H1 (cell line): ENCODE measurements at regions of chr7 and their contacts with region 1.

Region 1: GRCh38 chr7:129091484-129092002 is 36.6 kb upstream of the TNPO3 start:
- DNase-seq: peak; percentile 83 to 100
- H3K4me3 ChIP-seq: no peak overlapping the region
- H3K27ac ChIP-seq: no peak overlapping the region
- H3K4me1 ChIP-seq: no peaks in the 10 kb centered on the region
- H3K27me3 ChIP-seq: no peaks in the 10 kb centered on the region
- CTCF ChIP-seq: peak; percentile 98 to 99 (median 99)
- EP300 ChIP-seq: no peak
- POLR2A ChIP-seq: no peak
- RAD21 ChIP-seq: peak; percentile 99 to 100

Region 2: DNA sequence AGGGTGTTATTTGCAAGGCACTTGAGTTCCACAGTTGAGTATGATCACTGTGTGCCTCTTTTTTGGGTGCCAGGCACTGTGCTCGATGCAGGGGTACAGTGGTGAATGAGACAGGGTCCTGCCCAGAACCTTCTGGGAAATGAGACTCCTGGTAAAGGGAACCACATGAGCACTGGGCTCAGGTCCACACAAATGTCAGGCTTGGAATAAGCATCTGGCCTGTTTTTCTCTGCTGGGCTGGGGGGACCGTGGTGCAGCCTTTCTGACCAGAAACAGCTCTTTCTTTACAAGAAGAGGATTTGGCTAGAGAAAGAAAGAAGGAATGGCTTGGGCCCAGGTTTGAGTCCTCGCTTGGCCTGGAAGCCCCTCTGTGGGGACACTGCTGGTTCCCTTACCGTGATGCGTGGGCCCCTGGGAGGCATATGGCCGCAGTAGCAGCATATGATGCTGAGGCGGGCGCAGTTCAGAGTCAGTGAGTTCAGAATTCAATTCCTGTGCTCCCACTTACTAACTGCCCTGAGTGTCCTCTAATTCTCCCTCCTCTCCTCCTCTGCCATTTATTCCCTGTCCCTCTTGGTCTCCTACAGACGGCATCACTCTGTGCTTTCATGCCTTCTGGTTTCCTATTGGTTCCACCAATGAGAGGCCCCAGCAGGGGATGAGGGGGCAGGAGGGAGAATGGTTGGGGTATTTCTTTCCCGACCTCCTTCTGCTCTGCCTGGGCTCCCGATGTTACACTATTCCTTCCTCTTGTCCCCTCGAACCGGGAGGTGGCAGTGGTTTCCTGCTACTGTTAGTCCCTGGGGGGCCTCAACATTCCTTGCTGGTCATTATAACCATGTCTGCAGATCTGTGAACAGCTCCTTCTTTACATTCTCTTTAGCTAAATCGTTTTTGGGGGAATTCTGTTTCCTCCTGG is 171.4 kb before region 1 on chr7:
- CTCF ChIA-PET with region 1: interaction called, 10 read pairs
- POLR2A ChIA-PET with region 1: no interaction called
- DNase-seq: peak in 1 of 2 experiments; percentile 57
- H3K4me3 ChIP-seq: no peak overlapping the region
- H3K27ac ChIP-seq: no peak overlapping the region
- H3K4me1 ChIP-seq: peaks cover 2 to 12% (median 3%) of the 10 kb centered on the region in 4 experiments; a peak in 4 of 7 replicates
- H3K27me3 ChIP-seq: peaks cover 16 to 25% (median 24%) of the 10 kb centered on the region in 4 experiments
- CTCF ChIP-seq: peak; percentile 22 to 27 (median 24)
- EP300 ChIP-seq: no peak
- POLR2A ChIP-seq: no peak
- RAD21 ChIP-seq: peak; percentile 26 to 52; a peak in 3 of 4 replicates

Region 3: DNA sequence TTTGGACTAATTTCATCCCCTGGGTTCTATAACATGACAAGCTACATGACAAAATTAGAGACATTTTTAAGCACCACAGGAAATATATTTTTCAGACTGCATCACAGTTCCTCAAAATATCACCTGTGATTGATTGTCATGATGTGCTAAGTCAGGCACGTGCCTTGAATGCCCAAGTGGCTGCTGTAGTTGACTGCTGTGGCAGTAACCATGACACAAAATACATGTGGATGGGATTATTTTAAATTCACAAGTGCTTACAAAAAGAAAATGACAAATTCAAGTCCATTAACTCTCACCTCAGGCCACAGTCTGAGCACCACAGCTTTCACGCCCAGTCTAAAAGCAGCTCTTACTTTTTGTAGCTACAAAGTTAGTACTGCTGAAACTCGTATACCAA is 82.1 kb before region 1 on chr7:
- CTCF ChIA-PET with region 1: interaction called, 10 read pairs
- POLR2A ChIA-PET with region 1: no interaction called
- DNase-seq: no peak
- H3K4me3 ChIP-seq: no peak overlapping the region
- H3K27ac ChIP-seq: no peak overlapping the region
- H3K4me1 ChIP-seq: no peaks in the 10 kb centered on the region
- H3K27me3 ChIP-seq: no peaks in the 10 kb centered on the region
- CTCF ChIP-seq: no peak
- EP300 ChIP-seq: no peak
- POLR2A ChIP-seq: no peak
- RAD21 ChIP-seq: no peak

Region 4: DNA sequence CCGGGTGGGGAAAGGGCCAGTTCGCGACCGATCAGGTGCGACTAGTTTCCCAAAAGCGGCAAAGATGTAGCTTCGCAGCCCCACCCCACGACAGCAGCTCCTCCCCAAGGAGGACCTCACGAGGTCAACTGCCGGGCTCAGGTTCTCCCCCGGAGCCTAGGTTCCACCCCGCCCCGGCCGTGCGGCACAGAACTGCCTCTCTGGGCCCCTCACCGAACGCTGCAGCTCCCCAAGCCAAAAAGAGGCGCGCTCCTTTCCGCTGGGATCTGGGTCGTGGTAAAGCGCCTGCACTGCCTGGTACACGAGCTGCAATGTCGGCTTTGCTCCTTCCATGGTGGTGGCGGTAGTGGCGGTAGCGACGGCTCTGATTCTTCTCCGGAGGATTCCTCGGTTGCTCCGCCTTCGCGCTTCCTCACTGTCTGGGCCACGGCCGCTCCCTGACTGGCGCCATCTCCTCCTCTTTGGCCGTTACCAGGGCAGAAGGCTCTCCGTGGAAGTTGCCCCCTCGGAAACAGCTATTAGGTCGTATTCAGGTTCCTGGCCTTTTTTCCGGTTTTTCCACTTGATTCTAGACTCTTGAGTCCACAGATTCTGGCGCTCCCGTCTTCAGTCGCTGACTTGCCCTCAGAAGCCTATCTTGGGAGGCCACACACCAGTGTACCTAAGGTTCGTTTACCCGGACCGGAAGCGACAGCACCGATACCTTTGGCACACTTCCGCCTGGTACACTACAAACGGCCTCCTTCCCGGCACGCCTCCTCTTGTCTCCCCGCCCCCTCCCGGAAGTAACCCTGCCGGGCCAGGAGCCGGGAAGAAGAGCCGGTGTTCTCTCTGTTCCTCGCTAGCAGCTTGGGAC is 36.9 kb before region 1 on chr7 and contains the start of gene TNPO3:
- CTCF ChIA-PET with region 1: interaction called, 13 read pairs
- POLR2A ChIA-PET with region 1: interaction called, 7 read pairs
- DNase-seq: peak; percentile 83 to 95
- H3K4me3 ChIP-seq: peak within 1 kb of the TSS; percentile 83 to 99 (median 92)
- H3K27ac ChIP-seq: peak within 1 kb of the TSS; percentile 96
- H3K4me1 ChIP-seq: no peaks in the 10 kb centered on the region; a peak in 1 of 7 replicates
- H3K27me3 ChIP-seq: no peaks in the 10 kb centered on the region
- CTCF ChIP-seq: 0 out of 4 replicates have a peak, but pooled peaks of 1 of the 3 experiments have one; percentile 12
- EP300 ChIP-seq: no peak
- POLR2A ChIP-seq: peak; percentile 75 to 99
- RAD21 ChIP-seq: no peak
- total RNA-seq, gene TNPO3: 99.2 and 100 TPM in 2 replicates

Region 5: DNA sequence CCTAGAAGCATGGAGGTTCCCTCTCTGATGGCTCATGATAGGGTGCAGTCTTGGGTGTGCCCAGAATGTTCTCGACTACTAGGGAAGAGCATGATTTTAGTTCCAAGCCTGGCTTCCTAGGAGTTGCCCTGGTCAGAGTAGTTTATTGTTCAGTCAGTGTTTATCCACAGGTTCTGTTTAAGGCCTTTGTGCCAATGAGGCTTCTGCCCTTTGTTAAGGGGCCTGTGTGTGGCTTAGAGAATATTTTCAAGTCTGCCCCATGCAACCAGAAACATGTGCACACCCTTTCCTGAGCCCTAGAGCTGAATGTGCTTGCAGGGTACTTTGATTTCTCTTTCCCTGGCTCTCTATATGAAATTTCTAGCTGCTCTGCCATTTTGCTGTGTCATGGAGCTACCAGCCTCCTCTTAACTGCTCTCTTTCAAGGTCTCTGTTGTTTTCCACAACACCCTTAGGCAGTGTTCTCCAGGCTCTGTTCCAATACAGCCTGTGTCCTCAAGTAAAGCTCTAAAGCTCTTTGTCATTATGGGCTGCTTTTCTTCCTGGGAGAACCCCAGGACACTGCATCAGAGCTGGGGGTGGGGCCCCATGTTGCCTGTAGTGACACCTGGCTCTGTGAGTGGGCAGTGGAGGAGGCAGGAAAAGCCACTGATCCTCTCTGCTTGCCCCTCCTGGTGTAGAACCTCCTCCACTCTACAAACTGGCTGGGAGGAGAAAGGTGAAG is 18.9 kb after region 1 on chr7:
- CTCF ChIA-PET with region 1: interaction called, 17 read pairs
- POLR2A ChIA-PET with region 1: interaction called, 3 read pairs
- DNase-seq: peak in 1 of 2 experiments; percentile 61
- H3K4me3 ChIP-seq: 0 out of 8 replicates have a peak overlapping the region, but pooled peaks of 1 of the 4 experiments have one; percentile 3
- H3K27ac ChIP-seq: peak overlapping the region; percentile 50; the same call in 1 of the 2 replicates
- H3K4me1 ChIP-seq: peaks cover 4 to 11% (median 5%) of the 10 kb centered on the region in 4 experiments; a peak in 6 of 7 replicates
- H3K27me3 ChIP-seq: no peaks in the 10 kb centered on the region
- CTCF ChIP-seq: no peak
- EP300 ChIP-seq: no peak
- POLR2A ChIP-seq: peak in 1 of 2 experiments; percentile 16; a peak in 1 of 3 replicates
- RAD21 ChIP-seq: no peak